ENCODE measurements at regions of chr1 and their contacts with region 1.

Region 1: GRCh38 chr1:15409388-15410222 is at the start of gene EFHD2:
- DNase-seq: peak; percentile 79
- H3K4me3 Mint-ChIP-seq: peak within 1 kb of the TSS; percentile 90
- H3K27ac Mint-ChIP-seq: peak within 1 kb of the TSS; percentile 81
- H3K4me1 Mint-ChIP-seq: peaks cover 24% of the 10 kb centered on the region
- H3K27me3 Mint-ChIP-seq: peaks cover 2% of the 10 kb centered on the region
- total RNA-seq, gene EFHD2: 35.0 to 36.0 TPM

Region 2: DNA sequence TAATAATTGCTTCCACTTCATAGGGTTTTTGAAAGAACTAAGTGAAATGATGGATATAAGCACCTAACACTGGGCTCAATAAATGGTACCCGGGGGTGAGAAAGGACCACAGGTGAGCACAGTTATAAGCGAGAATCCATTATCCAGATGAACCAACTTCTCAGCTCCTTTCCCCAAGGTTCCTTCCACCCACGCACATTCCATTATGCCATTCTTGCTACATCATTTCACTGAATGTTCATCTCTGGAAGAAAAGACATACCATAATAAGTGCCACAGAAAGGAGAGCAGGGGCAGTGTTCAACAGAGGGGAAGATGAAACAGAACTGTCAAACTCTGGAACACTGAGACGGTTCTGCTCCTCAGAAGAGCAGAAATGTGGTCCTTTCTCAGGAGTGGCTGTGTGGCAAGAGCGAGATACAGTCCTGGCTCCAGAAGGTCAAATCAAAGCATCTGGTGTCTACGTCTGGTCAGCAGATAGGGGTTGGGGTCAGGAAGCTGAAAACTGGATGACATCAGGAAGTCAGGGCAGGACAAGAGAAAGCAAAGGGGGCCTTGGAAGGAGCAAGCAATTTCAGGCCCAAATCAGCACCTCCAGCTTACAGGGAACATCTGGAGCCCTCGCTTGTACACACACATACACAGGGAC is 511.5 kb before region 1 on chr1:
- CTCF ChIA-PET with region 1: no interaction called
- intact Hi-C with region 1: no loop called
- DNase-seq: no peak
- H3K4me3 Mint-ChIP-seq: no peak overlapping the region
- H3K27ac Mint-ChIP-seq: no peak overlapping the region
- H3K4me1 Mint-ChIP-seq: no peaks in the 10 kb centered on the region
- H3K27me3 Mint-ChIP-seq: peaks cover 6% of the 10 kb centered on the region

Region 3: GRCh38 chr1:15246960-15247614 is 162.5 kb before region 1 on chr1 and contains the start of gene FHAD1:
- CTCF ChIA-PET with region 1: no interaction called
- intact Hi-C with region 1: loop called (anchors 5 kb)
- DNase-seq: peak; percentile 48
- H3K4me3 Mint-ChIP-seq: peak within 1 kb of the TSS; percentile 51
- H3K27ac Mint-ChIP-seq: peak within 1 kb of the TSS; percentile 59
- H3K4me1 Mint-ChIP-seq: peaks cover 66% of the 10 kb centered on the region
- H3K27me3 Mint-ChIP-seq: peaks cover 50% of the 10 kb centered on the region
- total RNA-seq, gene FHAD1: 0.45 TPM in 1 of 2 experiments, not detected in the other

Region 4: GRCh38 chr1:15352123-15352957 is 57.3 kb before region 1 on chr1:
- CTCF ChIA-PET with region 1: no interaction called
- intact Hi-C with region 1: loop called (anchors 2 kb)
- DNase-seq: peak; percentile 63
- H3K4me3 Mint-ChIP-seq: no peak overlapping the region
- H3K27ac Mint-ChIP-seq: no peak overlapping the region
- H3K4me1 Mint-ChIP-seq: peaks cover 27% of the 10 kb centered on the region
- H3K27me3 Mint-ChIP-seq: peaks cover 9% of the 10 kb centered on the region

Region 5: DNA sequence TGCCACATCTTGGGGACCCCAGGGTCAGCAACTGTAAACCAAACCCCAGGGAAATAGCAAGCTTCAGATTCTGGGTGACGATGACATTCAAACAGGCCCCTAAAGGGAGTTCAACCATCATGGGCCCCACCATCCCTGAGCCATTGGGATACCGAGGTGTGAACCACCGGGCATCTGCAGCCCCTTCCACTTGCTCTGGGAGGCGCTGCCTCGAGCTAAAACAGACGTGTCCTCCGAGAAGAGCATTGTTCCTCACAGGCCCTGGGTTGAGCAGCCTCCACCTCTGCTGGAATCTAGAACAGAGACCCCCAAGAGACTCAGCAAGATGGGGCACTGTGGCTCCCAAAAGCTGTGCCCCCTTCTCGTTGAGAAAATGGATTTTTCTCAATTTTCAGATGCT is 18.9 kb before region 1 on chr1:
- CTCF ChIA-PET with region 1: no interaction called
- intact Hi-C with region 1: no loop called
- DNase-seq: no peak
- H3K4me3 Mint-ChIP-seq: no peak overlapping the region
- H3K27ac Mint-ChIP-seq: no peak overlapping the region
- H3K4me1 Mint-ChIP-seq: peaks cover 4% of the 10 kb centered on the region
- H3K27me3 Mint-ChIP-seq: peaks cover 13% of the 10 kb centered on the region

Measured in activated naive CD4-positive, alpha-beta T cell treated with anti-CD3 and anti-CD28 coated beads for 36 hours (primary cell).